CD4-positive, alpha-beta memory T cell (primary cell): ENCODE measurements at regions of chr9 and their contacts with region 1.

Region 1: DNA sequence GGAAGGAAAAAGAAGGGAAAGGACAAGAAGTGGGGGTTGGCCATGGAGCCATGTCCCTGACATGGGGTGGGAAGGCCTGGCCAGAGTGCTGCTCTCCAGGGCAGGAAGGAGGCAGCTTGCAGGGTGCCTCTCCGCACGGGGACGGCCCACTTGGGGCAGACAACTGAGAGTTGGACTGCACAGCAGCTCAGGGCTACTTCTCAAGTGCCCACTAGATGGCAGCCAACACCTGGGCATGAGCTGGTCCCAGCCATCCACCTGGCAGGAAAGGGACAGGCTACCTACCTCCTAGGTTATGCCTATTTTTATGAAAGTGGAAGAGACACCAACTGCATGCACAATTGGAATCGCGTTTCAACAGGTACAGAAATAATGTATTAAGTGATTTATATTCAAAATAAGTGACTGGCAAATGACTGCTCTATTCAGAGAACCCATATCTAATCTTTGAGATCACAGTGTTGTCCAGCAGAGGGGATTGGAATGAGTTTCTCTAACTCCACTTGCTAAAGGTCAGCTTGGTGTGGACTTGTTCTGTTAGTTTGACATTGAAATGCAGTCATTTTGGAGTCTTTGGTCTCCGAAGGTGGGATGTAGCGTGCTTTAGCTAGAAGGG is 113.4 kb downstream of the SYK start:
- DNase-seq: peak; percentile 59 to 66 (median 61)
- H3K4me3 ChIP-seq: no peak overlapping the region
- H3K4me3 Mint-ChIP-seq: no peak overlapping the region
- H3K27ac ChIP-seq: no peak overlapping the region
- H3K27ac Mint-ChIP-seq: no peak overlapping the region
- H3K4me1 ChIP-seq: no peaks in the 10 kb centered on the region
- H3K4me1 Mint-ChIP-seq: no peaks in the 10 kb centered on the region
- H3K27me3 ChIP-seq: no peaks in the 10 kb centered on the region
- H3K27me3 Mint-ChIP-seq: no peaks in the 10 kb centered on the region

Region 2: GRCh38 chr9:91036826-91037510 is 122.0 kb after region 1 on chr9:
- CTCF ChIA-PET with region 1: interaction called, 9 read pairs
- POLR2A ChIA-PET with region 1: no interaction called
- intact Hi-C with region 1: loop called (anchors 5 kb)
- DNase-seq: peak; percentile 42 to 61 (median 51)
- H3K4me3 ChIP-seq: no peak overlapping the region
- H3K4me3 Mint-ChIP-seq: peak overlapping the region in 3 of 8 donors; percentile 33 to 72 (median 52)
- H3K27ac ChIP-seq: no peak overlapping the region
- H3K27ac Mint-ChIP-seq: peak overlapping the region in 1 of 7 donors; percentile 25
- H3K4me1 ChIP-seq: peaks cover 12% of the 10 kb centered on the region
- H3K4me1 Mint-ChIP-seq: peaks cover 11 to 15% (median 12%) of the 10 kb centered on the region in 4 donors
- H3K27me3 ChIP-seq: no peaks in the 10 kb centered on the region
- H3K27me3 Mint-ChIP-seq: peaks cover 13 to 15% of the 10 kb centered on the region in 2 donors

Region 3: GRCh38 chr9:91433180-91433579 is 518.2 kb after region 1 on chr9:
- CTCF ChIA-PET with region 1: interaction called, 155 read pairs
- POLR2A ChIA-PET with region 1: no interaction called
- intact Hi-C with region 1: no loop called
- DNase-seq: peak in 2 of 5 donors; percentile 12 to 24
- H3K4me3 ChIP-seq: no peak overlapping the region
- H3K4me3 Mint-ChIP-seq: no peak overlapping the region
- H3K27ac ChIP-seq: no peak overlapping the region
- H3K27ac Mint-ChIP-seq: no peak overlapping the region
- H3K4me1 ChIP-seq: no peaks in the 10 kb centered on the region
- H3K4me1 Mint-ChIP-seq: no peaks in the 10 kb centered on the region
- H3K27me3 ChIP-seq: peaks cover 5% of the 10 kb centered on the region
- H3K27me3 Mint-ChIP-seq: peaks cover 3 to 7% of the 10 kb centered on the region in 2 donors

Region 4: GRCh38 chr9:91681461-91682305 is 766.7 kb after region 1 on chr9:
- CTCF ChIA-PET with region 1: interaction called, 5 read pairs
- POLR2A ChIA-PET with region 1: no interaction called
- intact Hi-C with region 1: loop called (anchors 1 kb)
- DNase-seq: peak; percentile 29 to 53 (median 38)
- H3K4me3 ChIP-seq: no peak overlapping the region
- H3K4me3 Mint-ChIP-seq: peak overlapping the region in 3 of 8 donors; percentile 32 to 40 (median 38)
- H3K27ac ChIP-seq: no peak overlapping the region
- H3K27ac Mint-ChIP-seq: no peak overlapping the region
- H3K4me1 ChIP-seq: peaks cover 3% of the 10 kb centered on the region
- H3K4me1 Mint-ChIP-seq: no peaks in the 10 kb centered on the region
- H3K27me3 ChIP-seq: peaks cover 6% of the 10 kb centered on the region
- H3K27me3 Mint-ChIP-seq: peaks cover 15 to 29% of the 10 kb centered on the region in 2 donors

Region 5: GRCh38 chr9:91727316-91727861 is 812.4 kb after region 1 on chr9:
- CTCF ChIA-PET with region 1: interaction called, 32 read pairs
- POLR2A ChIA-PET with region 1: no interaction called
- intact Hi-C with region 1: no loop called
- DNase-seq: peak in 4 of 5 donors; percentile 17 to 30 (median 26)
- H3K4me3 ChIP-seq: no peak overlapping the region
- H3K4me3 Mint-ChIP-seq: no peak overlapping the region
- H3K27ac ChIP-seq: no peak overlapping the region
- H3K27ac Mint-ChIP-seq: no peak overlapping the region
- H3K4me1 ChIP-seq: no peaks in the 10 kb centered on the region
- H3K4me1 Mint-ChIP-seq: no peaks in the 10 kb centered on the region
- H3K27me3 ChIP-seq: no peaks in the 10 kb centered on the region
- H3K27me3 Mint-ChIP-seq: peaks cover 0 to 5% of the 10 kb centered on the region in 2 donors

Region 6: DNA sequence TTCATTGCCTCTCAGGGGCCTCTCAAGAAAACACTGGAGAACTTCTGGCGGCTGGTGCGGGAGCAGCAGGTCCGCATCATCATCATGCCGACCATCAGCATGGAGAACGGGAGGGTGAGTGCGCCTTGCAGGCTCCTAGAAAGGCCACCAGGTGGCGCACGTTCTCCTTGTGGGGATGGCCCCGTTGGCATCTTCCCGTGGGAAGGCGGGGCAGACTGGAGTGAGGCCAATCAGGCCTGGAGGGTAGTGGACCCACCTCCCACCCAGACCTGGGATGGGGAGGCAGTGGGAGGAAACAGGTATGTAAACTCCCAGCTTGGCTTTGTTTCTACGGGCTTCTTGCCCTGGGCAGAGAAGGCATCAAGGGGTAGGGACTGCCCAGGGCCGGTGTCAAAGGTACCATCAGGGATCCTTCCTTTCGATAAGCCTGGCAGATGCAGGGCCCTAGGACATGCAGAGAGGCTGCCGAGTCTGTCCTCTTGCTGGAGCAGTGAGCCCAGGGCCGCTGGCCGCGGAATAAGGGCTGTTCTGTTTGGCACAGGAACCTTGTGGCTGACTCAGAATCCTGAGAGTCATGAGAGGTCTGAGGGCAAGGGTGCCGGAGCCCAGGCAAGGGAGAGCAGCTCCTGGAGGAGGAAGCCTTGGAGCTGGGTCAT is 1219.1 kb after region 1 on chr9:
- CTCF ChIA-PET with region 1: no interaction called
- POLR2A ChIA-PET with region 1: no interaction called
- intact Hi-C with region 1: loop called (anchors 10 kb)
- DNase-seq: peak; percentile 63 to 70 (median 64)
- H3K4me3 ChIP-seq: peak overlapping the region in 1 of 2 donors; percentile 13
- H3K4me3 Mint-ChIP-seq: peak overlapping the region; percentile 25 to 76 (median 57)
- H3K27ac ChIP-seq: no peak overlapping the region
- H3K27ac Mint-ChIP-seq: peak overlapping the region in 4 of 7 donors; percentile 2 to 76 (median 9)
- H3K4me1 ChIP-seq: peaks cover 9% of the 10 kb centered on the region
- H3K4me1 Mint-ChIP-seq: peaks cover 6 to 13% (median 9%) of the 10 kb centered on the region in 4 donors
- H3K27me3 ChIP-seq: no peaks in the 10 kb centered on the region
- H3K27me3 Mint-ChIP-seq: peaks cover 8 to 26% of the 10 kb centered on the region in 2 donors